ENCODE measurements at regions of chr15 and their contacts with region 1.

Region 1: GRCh38 chr15:60397772-60398445 is at the start of gene ANXA2:
- DNase-seq: peak; percentile 96
- H3K4me3 Mint-ChIP-seq: peak within 1 kb of the TSS; percentile 86
- H3K27ac Mint-ChIP-seq: peak within 1 kb of the TSS; percentile 99
- H3K4me1 Mint-ChIP-seq: peaks cover 59% of the 10 kb centered on the region
- H3K27me3 Mint-ChIP-seq: peaks cover 13% of the 10 kb centered on the region
- CTCF ChIP-seq: no peak
- total RNA-seq, gene ANXA2: 3,100 and 3,305 TPM in 2 replicates

Region 2: DNA sequence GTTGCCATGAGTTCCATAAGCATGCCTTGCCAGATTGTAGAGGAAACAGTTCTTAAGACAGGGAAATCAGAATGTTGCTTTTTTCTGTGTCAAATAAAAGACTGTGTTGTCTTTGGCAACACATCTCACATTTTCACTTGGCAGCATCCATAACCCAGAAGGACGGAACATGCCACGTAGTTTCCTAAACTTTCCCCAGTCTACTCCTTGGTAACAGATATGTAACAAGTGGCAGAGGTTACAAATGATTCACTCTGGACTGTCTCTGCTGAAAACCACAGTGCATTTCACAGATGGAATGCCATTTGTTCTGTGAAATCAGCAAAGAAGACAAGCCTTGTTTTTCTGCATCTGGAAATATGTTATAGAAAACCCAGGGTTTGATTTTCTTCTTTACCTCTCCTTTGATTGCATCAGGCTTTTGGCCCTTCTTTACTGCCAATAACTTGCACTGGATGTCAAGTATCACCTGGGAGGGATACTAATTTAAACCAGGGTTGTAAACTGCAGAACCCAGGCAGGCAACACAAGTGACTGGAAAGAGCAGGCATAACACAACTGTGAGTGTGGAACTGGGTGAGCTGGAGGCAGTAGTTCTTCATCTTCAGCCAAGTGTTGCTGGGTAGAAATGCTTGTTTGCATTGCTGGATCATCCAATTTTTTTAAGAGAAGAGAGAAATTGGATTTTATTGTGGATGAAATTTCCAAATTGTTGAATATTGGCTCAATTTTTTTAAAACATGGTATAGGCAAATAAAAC is 518.2 kb before region 1 on chr15:
- CTCF ChIA-PET with region 1: no interaction called
- intact Hi-C with region 1: no loop called
- DNase-seq: no peak
- H3K4me3 Mint-ChIP-seq: no peak overlapping the region
- H3K27ac Mint-ChIP-seq: no peak overlapping the region
- H3K4me1 Mint-ChIP-seq: no peaks in the 10 kb centered on the region
- H3K27me3 Mint-ChIP-seq: peaks cover 79% of the 10 kb centered on the region
- CTCF ChIP-seq: no peak

Region 3: GRCh38 chr15:60408438-60409105 is 10.7 kb after region 1 on chr15:
- CTCF ChIA-PET with region 1: interaction called, 16 read pairs
- intact Hi-C with region 1: loop called (anchors 1 kb)
- DNase-seq: no peak
- H3K4me3 Mint-ChIP-seq: peak overlapping the region; percentile 55
- H3K27ac Mint-ChIP-seq: peak overlapping the region; percentile 100
- H3K4me1 Mint-ChIP-seq: peaks cover 65% of the 10 kb centered on the region
- H3K27me3 Mint-ChIP-seq: no peaks in the 10 kb centered on the region
- CTCF ChIP-seq: no peak

Measured in Calu3 (cell line).